Stomach (tissue), 19 donors: ENCODE measurements at regions of chr17 and their contacts with region 1.

Region 1: DNA sequence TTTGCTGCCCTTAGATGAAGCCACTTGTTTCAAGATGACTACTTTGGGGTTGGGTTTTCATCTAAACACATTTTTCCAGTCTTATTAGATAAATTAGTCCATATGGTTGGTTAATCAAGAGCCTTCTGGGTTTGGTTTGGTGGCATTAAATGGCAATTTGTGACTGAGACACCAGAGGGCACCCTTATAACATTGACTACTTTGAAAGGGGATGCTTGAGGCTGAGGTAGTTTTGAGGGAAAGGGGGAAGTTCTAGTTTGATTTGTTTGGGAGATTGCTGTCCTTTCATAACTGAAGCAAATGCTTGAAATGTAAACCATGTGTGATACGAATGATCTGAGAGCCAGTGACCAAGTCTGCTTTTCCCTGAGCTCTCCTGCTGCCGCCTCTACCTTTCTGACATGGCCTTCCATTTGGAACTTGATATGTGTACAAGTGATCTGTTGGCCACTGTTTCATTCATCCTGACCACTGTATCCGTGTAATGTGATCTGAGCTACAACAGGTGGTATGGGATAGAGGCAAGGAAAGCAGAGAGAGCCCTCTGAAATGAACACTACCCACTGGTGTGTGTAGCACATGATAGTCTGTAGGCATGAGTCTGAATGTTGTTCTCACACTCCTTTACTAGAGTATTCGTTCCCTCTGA is 5.8 kb upstream of the RARA start:
- DNase-seq: peak; percentile 54 to 88
- H3K4me3 ChIP-seq: no peak overlapping the region
- H3K27ac ChIP-seq: peak overlapping the region in 2 of 5 donors; percentile 62 to 74
- H3K4me1 ChIP-seq: peaks cover 24 to 46% (median 38%) of the 10 kb centered on the region in 4 donors
- H3K27me3 ChIP-seq: no peaks in the 10 kb centered on the region
- CTCF ChIP-seq: peak in 5 of 7 experiments; percentile 40 to 92 (median 79)
- EP300 ChIP-seq: no peak
- POLR2A ChIP-seq: no peak

Region 2: DNA sequence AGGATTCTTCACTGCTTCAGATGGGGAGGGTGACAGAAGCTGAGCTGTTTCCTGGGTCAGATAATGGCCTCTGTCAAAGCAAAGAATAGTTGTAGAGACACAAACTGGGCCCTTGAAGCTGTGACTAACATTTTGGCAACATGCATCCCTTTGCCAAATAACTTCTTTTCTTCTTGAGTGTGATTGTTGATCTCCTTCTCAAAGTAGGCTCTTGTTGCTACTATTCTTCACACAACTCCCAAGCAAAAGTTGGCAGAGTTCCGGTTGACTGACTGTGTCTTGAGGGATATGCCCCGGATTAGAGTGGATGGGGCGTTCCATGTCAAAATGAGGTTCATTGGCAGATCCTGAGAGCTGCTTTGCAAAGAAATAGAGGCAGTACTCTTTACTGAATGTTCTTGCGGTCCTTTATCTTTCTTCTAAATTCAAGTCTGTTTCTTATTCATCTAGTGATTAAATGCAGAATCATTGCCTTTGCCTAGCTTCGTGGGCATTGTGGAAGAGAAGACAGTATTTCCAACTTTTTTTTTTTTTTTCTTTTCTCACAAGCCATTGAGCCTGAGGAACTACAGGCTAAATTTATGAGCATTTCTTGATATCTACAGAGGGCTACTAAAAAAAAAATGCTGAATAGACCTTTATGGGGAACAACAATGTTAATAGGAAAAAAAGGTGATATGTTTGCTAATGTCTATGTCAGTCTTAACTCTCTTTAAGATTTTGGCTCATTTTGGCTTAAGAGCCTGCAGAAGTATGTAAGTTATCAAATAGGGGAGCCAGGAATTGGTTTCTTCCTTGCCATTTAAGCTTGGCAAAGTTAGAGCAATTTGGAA is 78.2 kb before region 1 on chr17:
- intact Hi-C with region 1: no loop called
- DNase-seq: peak in 1 of 2 donors; percentile 40
- H3K4me3 ChIP-seq: no peak overlapping the region
- H3K27ac ChIP-seq: peak overlapping the region; percentile 55 to 72 (median 63)
- H3K4me1 ChIP-seq: peaks cover 14 to 53% (median 42%) of the 10 kb centered on the region in 4 donors
- H3K27me3 ChIP-seq: no peaks in the 10 kb centered on the region
- CTCF ChIP-seq: no peak
- EP300 ChIP-seq: no peak
- POLR2A ChIP-seq: no peak

Region 3: GRCh38 chr17:40355123-40355803 is 52.1 kb after region 1 on chr17:
- intact Hi-C with region 1: loop called (anchors 2 kb)
- DNase-seq: peak; percentile 80 to 91
- H3K4me3 ChIP-seq: no peak overlapping the region
- H3K27ac ChIP-seq: peak overlapping the region in 3 of 5 donors; percentile 14 to 65 (median 32)
- H3K4me1 ChIP-seq: peaks cover 23 to 74% (median 45%) of the 10 kb centered on the region in 4 donors
- H3K27me3 ChIP-seq: no peaks in the 10 kb centered on the region
- CTCF ChIP-seq: peak in 6 of 7 experiments; percentile 82 to 99 (median 94)
- EP300 ChIP-seq: no peak
- POLR2A ChIP-seq: no peak